ENCODE measurements at regions of chr17 and their contacts with region 1.

Region 1: GRCh38 chr17:42677008-42677857 is 439 bp upstream of the PLEKHH3 start:
- DNase-seq: peak; percentile 100
- ATAC-seq: peak; percentile 68
- H3K4me3 Mint-ChIP-seq: peak overlapping the region; percentile 79
- H3K27ac Mint-ChIP-seq: peak overlapping the region; percentile 94
- H3K4me1 Mint-ChIP-seq: peaks cover 40% of the 10 kb centered on the region
- H3K27me3 Mint-ChIP-seq: peaks cover 8% of the 10 kb centered on the region
- CTCF ChIP-seq: no peak

Region 2: DNA sequence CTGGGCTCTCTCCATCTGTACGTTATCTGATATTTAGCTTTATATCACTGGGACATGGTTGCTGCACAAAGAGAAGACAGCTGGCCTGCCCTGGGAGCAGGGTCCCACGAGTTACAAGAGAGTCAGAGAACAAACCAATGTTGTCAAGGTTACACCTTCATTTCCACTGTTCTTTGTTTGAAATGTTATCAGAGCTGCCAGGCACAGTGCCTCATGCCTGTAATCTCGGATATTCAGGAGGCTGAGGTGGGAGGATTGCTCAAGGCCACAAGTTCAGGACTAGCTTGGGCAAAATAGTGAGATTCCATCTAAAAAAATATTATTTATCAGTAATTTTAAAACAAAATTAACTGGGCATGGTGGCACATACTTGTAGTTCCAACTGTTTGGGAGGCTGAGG is 183.9 kb before region 1 on chr17:
- CTCF ChIA-PET with region 1: no interaction called
- POLR2A ChIA-PET with region 1: no interaction called
- DNase-seq: no peak
- ATAC-seq: no peak
- H3K4me3 Mint-ChIP-seq: no peak overlapping the region
- H3K27ac Mint-ChIP-seq: 0 out of 2 replicates have a peak overlapping the region, but pooled peaks have one; percentile 41
- H3K4me1 Mint-ChIP-seq: no peaks in the 10 kb centered on the region
- H3K27me3 Mint-ChIP-seq: no peaks in the 10 kb centered on the region
- CTCF ChIP-seq: no peak

Region 3: DNA sequence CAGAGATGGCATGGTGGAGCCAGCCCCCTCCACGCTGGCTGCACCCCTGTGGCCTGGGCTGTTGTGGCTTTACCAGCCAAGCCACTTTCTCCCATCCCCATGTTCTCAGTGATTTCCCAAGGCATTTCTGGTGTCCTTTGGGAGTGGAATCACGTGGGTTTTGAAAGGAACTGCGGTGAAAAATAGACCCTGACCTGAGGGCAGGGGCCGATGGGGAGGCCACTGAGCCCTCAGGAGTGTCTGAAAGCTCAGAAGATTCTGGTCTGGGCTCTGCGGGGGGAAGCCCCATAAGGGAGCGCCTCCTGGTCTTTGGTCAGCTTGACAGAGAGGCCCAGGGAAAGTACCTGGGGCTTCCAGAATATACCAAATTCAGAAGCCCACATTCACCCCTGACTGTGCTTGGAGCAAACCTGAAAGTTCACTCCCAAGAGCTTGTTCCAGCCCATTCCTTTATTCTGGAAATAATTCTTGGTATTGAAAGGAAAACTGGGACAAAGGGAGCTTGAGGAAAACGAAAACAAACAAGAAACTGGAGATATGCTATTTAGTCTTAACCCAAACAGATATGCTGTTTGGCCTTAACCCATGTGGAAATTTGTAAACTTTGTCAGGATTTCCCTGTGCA is 164.5 kb before region 1 on chr17:
- CTCF ChIA-PET with region 1: no interaction called
- POLR2A ChIA-PET with region 1: no interaction called
- DNase-seq: no peak
- ATAC-seq: no peak
- H3K4me3 Mint-ChIP-seq: no peak overlapping the region
- H3K27ac Mint-ChIP-seq: no peak overlapping the region
- H3K4me1 Mint-ChIP-seq: no peaks in the 10 kb centered on the region
- H3K27me3 Mint-ChIP-seq: no peaks in the 10 kb centered on the region; the same call in 1 of the 2 replicates
- CTCF ChIP-seq: no peak

Region 4: DNA sequence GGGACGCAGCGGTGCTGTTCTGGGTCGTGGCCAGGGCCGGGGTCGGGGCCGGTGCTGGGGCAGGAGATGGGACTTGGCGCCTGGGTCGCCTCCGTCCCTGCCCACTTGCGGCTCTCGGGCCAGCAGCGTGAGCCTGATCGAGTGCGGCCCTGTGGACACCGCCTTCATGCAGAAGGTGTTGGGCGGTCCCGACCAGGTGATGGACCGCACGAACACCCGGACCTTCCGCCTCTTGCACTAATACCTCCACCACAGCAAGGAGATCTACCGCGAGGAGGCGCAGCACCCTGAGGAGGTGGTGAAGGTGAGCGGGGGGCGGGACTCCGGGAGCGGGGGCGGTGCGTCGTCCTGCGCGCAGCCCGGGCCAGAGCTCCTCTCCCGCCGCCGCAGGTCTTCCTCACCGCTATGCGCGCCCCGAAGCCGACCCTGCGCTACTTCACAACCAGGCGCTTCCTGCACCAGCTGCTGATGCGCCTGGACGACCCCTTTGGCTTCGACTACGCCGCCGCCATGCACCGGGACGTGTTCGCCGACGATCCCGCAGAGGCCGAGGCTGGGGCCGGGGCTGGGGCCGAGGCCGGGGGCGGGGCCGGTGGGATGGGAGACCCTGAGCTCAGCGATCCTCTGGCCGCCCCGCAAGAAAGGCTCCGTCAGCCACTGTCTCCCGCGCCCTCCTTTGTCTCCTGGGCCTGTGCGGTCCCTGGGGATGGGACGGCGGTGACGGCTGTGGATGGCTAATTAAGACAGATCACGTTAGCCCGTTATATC is 129.0 kb before region 1 on chr17:
- CTCF ChIA-PET with region 1: interaction called, 19 read pairs
- POLR2A ChIA-PET with region 1: no interaction called
- DNase-seq: peak; percentile 97
- ATAC-seq: peak; percentile 87
- H3K4me3 Mint-ChIP-seq: peak overlapping the region; percentile 59
- H3K27ac Mint-ChIP-seq: no peak overlapping the region
- H3K4me1 Mint-ChIP-seq: peaks cover 15% of the 10 kb centered on the region
- H3K27me3 Mint-ChIP-seq: peaks cover 2% of the 10 kb centered on the region; the same call in 1 of the 2 replicates
- CTCF ChIP-seq: no peak; the same call in 1 of the 2 replicates

Region 5: DNA sequence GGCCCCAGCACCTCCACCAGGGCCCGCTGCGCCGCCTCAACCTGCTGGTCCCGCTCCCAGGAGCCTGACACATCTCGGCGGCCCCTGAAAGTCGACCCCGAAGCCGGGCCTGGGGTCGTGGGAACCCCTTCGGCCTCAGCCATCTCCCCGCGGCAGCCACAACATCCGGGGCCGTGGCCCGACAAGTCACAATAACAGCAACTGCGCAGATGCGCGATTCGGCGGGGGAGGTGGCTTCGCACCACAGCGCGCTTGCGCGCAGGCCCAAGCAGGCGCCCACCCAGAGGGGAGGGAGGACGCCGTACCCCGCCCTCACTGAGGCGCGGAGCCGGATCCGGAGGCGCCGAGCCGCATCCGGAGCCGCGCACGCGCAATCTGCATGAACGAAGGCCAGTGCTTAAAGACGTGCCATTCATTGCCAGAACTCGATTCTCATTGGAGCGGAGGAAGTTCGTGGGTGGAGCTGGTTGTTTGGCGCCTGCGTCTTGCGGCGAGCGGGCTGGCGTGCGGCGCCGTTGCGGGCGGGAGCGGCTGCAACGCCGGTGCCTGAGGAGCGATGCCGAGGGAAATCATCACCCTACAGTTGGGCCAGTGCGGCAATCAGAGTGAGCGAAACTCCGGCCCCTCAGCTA is 67.9 kb before region 1 on chr17 and contains the starts of genes RETREG3 and TUBG1:
- CTCF ChIA-PET with region 1: interaction called, 24 read pairs
- POLR2A ChIA-PET with region 1: interaction called, 9 read pairs
- DNase-seq: peak; percentile 99
- ATAC-seq: peak; percentile 94
- H3K4me3 Mint-ChIP-seq: peak within 1 kb of the TSS; percentile 100
- H3K27ac Mint-ChIP-seq: peak within 1 kb of the TSS; percentile 97
- H3K4me1 Mint-ChIP-seq: peaks cover 17% of the 10 kb centered on the region
- H3K27me3 Mint-ChIP-seq: no peaks in the 10 kb centered on the region
- CTCF ChIP-seq: no peak
- total RNA-seq, gene RETREG3: 39.8 to 43.2 TPM (median 40.4 TPM) in 3 replicates
- total RNA-seq, gene TUBG1: 130 to 141 TPM (median 140 TPM) in 3 replicates

Region 6: GRCh38 chr17:42623732-42624596 is 53.3 kb before region 1 on chr17:
- CTCF ChIA-PET with region 1: interaction called, 61 read pairs
- POLR2A ChIA-PET with region 1: interaction called, 5 read pairs
- DNase-seq: no peak
- ATAC-seq: no peak
- H3K4me3 Mint-ChIP-seq: no peak overlapping the region
- H3K27ac Mint-ChIP-seq: no peak overlapping the region
- H3K4me1 Mint-ChIP-seq: peaks cover 2% of the 10 kb centered on the region; the same call in 1 of the 2 replicates
- H3K27me3 Mint-ChIP-seq: no peaks in the 10 kb centered on the region
- CTCF ChIP-seq: no peak

Region 7: DNA sequence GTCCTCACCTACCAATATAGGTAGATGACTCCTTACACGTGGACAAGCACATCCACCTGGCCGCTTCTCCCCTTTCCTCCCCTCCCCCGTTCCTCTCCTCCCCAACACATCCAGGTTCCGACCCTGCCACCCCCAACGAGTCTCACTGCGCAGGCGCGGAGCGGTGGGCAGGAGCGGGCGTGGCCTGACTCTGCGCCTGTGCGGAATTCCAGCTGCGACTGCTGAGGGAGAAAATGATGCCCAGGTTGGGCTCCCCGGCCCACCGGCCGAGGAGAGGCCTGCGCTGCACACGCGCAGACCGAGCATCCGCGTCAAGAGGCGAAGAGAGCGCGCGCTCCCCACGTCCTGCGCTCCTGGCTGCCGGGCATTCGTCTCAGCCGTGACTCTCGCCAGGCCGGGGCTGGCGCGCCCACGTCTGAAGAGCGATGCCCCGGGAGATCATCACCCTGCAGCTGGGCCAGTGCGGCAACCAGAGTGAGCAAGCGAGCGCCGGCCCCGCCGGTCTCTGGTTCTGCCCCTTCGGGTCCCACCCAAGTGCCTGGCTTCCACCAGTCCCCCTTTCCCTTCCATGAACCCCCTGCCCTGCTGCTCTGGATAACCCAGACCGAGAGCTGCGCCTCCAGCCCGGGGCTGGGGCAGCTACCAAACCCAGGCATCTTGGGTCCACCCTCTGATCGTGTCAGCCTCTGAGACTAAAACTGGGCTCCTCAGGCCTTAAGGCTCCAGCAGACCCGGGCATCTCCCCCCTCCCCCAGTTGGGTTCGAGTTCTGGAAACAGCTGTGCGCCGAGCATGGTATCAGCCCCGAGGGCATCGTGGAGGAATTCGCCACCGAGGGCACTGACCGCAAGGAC is 17.9 kb before region 1 on chr17 and contains the start of gene TUBG2:
- CTCF ChIA-PET with region 1: interaction called, 44 read pairs
- POLR2A ChIA-PET with region 1: interaction called, 5 read pairs
- DNase-seq: peak; percentile 96
- ATAC-seq: peak; percentile 88
- H3K4me3 Mint-ChIP-seq: peak within 1 kb of the TSS; percentile 85
- H3K27ac Mint-ChIP-seq: peak within 1 kb of the TSS; percentile 57
- H3K4me1 Mint-ChIP-seq: peaks cover 11% of the 10 kb centered on the region
- H3K27me3 Mint-ChIP-seq: peaks cover 3% of the 10 kb centered on the region
- CTCF ChIP-seq: no peak
- total RNA-seq, gene TUBG2: 22.1 to 26.7 TPM (median 22.2 TPM) in 3 replicates

Region 8: DNA sequence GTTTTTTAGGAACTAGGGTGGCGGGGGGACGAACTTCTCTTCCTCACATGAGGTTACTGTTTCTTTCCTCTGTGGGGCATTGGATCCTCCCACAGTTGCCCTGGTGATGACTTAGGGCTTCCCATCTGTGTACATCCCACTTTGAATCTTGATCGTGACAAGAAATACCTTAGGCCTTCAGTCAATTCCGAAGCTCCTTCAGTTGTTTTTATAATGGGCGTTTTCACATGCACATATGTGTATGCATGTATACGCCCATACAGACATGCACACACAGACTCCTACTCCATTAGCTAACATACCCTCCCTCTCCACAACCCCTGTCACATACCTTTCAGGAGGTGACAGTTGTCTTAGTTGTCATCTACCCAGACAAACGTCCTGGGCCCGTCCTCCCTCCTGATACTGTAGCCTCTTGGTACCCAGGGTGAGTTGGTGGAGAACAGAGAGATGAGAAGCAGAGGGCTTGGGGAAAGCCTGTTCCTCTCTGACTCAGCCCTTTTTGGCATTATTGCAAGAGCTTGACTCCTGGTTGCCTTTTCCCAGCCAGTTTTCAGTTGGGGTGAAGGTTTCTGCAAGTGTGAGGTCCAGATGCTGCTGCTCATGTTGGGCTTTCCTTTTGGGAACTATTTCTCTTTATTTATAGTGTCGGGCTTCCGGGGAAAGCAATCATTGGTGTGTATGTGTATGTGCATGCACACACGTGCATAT is 164.9 kb after region 1 on chr17:
- CTCF ChIA-PET with region 1: no interaction called
- POLR2A ChIA-PET with region 1: no interaction called
- DNase-seq: no peak
- ATAC-seq: no peak
- H3K4me3 Mint-ChIP-seq: no peak overlapping the region
- H3K27ac Mint-ChIP-seq: no peak overlapping the region
- H3K4me1 Mint-ChIP-seq: no peaks in the 10 kb centered on the region
- H3K27me3 Mint-ChIP-seq: no peaks in the 10 kb centered on the region
- CTCF ChIP-seq: no peak